Vagina (tissue), 2 donors: ENCODE measurements at regions of chr10 and their contacts with region 1.

Region 1: DNA sequence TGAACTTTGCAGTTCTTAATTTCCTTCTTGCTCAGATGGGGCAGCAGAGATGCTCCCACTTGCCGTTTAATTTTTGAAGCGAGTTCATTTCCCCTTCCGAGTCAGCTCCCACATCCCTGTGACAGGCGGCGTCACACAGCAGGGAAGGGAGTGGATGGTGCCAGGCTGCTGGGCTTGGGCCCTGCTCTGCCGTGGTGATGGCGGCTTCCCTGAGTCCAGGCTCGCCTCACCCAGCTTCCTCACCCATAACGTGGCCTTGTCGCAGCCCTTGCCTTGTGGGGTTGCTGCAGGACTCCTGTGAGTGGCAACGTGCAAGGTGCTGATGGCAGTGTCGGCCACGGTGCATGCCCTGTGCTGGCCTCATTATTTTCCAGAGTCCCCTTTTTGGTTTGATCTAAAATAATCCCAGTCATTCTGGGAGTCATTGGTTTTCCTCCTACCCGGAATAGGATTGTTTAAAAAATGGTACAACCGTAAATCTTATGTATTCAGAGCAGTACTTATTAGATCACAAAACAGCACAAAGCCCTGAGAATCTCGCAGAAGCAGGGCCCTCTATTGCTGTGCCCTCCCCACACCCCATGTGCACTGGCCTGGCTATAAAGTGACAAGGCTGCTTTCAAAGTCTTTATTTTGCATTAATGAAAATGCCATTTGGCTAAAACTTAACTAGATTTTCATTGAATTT is 260.1 kb downstream of the WDR37 start:
- DNase-seq: no peak
- H3K4me3 ChIP-seq: no peak overlapping the region
- H3K27ac ChIP-seq: no peak overlapping the region
- H3K4me1 ChIP-seq: no peaks in the 10 kb centered on the region
- H3K27me3 ChIP-seq: no peaks in the 10 kb centered on the region
- CTCF ChIP-seq: no peak
- POLR2A ChIP-seq: no peak

Region 2: DNA sequence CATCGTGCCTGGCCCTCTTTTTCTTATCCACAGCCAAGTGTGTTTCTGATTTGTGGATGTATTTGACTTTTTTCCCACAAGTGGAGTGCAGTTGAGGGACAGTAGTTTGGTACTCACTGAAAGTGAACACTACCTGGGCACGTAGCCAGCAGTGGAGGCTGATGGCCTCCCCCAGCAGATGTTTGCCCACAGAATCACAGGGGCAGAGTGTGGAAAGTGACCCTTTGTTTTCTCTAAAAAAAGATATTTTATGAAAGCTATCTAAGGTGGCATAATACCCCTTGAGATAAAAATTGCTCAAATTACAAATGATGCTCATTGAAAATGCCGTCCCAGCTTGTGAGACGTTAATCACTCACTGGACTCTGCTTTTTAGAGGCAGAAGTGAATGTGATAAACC is 231.0 kb before region 1 on chr10:
- intact Hi-C with region 1: no loop called
- DNase-seq: no peak
- H3K4me3 ChIP-seq: no peak overlapping the region
- H3K27ac ChIP-seq: no peak overlapping the region
- H3K4me1 ChIP-seq: no peaks in the 10 kb centered on the region
- H3K27me3 ChIP-seq: no peaks in the 10 kb centered on the region
- CTCF ChIP-seq: no peak
- POLR2A ChIP-seq: no peak

Region 3: DNA sequence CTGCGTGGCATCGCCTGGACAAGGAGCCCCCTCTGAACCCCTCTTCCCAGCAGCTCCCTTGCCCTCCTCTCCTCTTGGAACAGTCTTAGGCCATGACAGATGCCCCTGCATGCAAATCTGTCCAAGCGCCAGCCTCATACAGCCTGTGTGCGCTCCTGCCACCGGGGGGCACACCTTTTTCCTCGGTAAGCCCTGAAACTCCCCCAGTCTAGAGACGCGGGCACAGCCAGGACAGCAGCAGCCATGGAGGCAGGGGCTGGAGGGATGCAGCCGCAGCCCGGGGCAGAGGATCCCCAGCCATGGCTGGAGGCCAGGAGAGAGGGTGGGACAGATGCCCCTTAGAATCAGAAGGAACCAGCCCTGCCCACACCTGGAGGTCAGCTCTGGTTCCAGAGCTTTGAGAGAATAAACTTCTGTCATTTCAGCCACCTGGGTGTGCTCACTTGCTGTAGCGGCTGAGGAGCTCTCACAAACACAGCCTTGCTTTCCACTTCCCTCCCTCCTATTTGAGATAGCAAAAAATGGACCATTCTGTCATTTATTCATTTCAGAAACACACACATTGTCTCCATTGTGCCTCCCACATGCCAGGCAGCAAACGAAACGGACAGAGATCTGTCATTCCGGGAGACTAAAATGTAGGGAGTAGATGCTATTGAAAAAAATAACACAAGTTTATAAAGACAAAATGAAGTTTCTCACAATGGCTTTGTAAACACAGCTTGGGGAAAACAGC is 18.5 kb before region 1 on chr10:
- intact Hi-C with region 1: no loop called
- DNase-seq: no peak
- H3K4me3 ChIP-seq: no peak overlapping the region
- H3K27ac ChIP-seq: no peak overlapping the region
- H3K4me1 ChIP-seq: peaks cover 7% of the 10 kb centered on the region
- H3K27me3 ChIP-seq: no peaks in the 10 kb centered on the region
- CTCF ChIP-seq: no peak
- POLR2A ChIP-seq: no peak

Region 4: GRCh38 chr10:2791774-2792443 is 1475.6 kb after region 1 on chr10:
- intact Hi-C with region 1: loop called (anchors 10 kb)
- DNase-seq: no peak
- H3K4me3 ChIP-seq: no peak overlapping the region
- H3K27ac ChIP-seq: no peak overlapping the region
- H3K4me1 ChIP-seq: no peaks in the 10 kb centered on the region
- H3K27me3 ChIP-seq: no peaks in the 10 kb centered on the region
- CTCF ChIP-seq: no peak
- POLR2A ChIP-seq: no peak